Kidney (tissue), 22 donors: ENCODE measurements at regions of chr16 and their contacts with region 1.

Region 1: GRCh38 chr16:22188595-22189442 is 17.3 kb upstream of the EEF2K start:
- DNase-seq: peak; percentile 72 to 91 (median 83)
- H3K4me3 ChIP-seq: no peak overlapping the region
- H3K27ac ChIP-seq: peak overlapping the region in 1 of 2 donors; percentile 99
- H3K4me1 ChIP-seq: peaks cover 0 to 26% (median 8%) of the 10 kb centered on the region in 3 donors
- H3K27me3 ChIP-seq: no peaks in the 10 kb centered on the region
- CTCF ChIP-seq: peak; percentile 88

Region 2: GRCh38 chr16:22001591-22001990 is 187.2 kb before region 1 on chr16:
- intact Hi-C with region 1: loop called (anchors 5 kb)
- DNase-seq: no peak
- H3K4me3 ChIP-seq: no peak overlapping the region
- H3K27ac ChIP-seq: no peak overlapping the region
- H3K4me1 ChIP-seq: peaks cover 0 to 3% (median 0%) of the 10 kb centered on the region in 3 donors
- H3K27me3 ChIP-seq: no peaks in the 10 kb centered on the region
- CTCF ChIP-seq: no peak

Region 3: DNA sequence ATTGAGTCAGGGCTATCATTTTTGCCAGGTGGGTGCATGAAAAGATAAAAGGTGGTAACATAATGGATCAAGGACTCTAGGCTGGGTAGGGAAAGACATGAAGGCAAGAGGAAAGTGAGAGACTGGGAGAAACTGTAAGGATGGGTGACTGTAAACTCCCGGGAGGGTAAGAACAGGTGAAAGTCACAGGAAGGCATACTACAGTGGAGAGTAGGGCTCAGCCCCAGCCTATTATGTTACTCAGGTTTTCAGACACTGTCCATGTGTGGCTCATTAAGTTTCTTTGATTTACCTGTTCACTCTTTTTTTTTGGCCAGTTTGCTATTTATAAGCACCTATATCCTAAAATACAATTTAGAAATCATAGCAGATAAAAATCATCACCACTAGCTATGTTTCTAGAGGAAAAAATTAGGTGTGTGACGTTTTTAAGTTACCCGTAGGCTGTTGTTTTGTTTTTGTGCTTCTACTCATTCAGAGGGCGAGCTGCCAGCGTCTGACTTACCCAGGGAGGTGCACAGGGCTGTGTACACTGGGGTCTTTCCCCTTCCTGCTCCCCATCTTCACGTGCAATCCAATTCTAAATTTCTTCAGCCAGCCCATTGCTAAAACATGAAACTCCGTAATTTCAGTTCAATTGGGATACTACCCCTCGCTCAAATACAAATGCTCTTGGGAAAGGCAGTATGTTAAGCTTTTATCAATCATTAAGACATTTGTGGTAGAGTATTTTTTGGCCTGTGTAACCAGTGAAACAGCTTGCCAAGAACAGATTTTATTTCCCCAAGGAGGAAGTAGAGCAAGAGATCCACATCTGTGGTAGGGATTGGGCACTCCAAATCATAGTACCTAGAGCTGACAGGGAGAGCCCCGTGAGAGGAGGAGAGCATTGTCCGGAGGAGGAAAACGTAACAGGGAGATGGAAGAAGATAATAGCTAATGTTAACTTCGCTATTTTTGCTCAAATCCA is 118.2 kb before region 1 on chr16:
- intact Hi-C with region 1: no loop called
- DNase-seq: no peak
- H3K4me3 ChIP-seq: peak overlapping the region in 2 of 3 donors; percentile 44 to 54
- H3K27ac ChIP-seq: peak overlapping the region in 1 of 2 donors; percentile 28
- H3K4me1 ChIP-seq: peaks cover 0 to 22% (median 13%) of the 10 kb centered on the region in 3 donors
- H3K27me3 ChIP-seq: no peaks in the 10 kb centered on the region
- CTCF ChIP-seq: no peak

Region 4: GRCh38 chr16:22424161-22424937 is 235.5 kb after region 1 on chr16:
- intact Hi-C with region 1: no loop called
- DNase-seq: no peak
- H3K4me3 ChIP-seq: no peak overlapping the region
- H3K27ac ChIP-seq: peak overlapping the region; percentile 8 to 11
- H3K4me1 ChIP-seq: peaks cover 0 to 4% (median 0%) of the 10 kb centered on the region in 3 donors
- H3K27me3 ChIP-seq: no peaks in the 10 kb centered on the region
- CTCF ChIP-seq: no peak